PC-3 (cell line): ENCODE measurements at regions of chr11 and their contacts with region 1.

Region 1: DNA sequence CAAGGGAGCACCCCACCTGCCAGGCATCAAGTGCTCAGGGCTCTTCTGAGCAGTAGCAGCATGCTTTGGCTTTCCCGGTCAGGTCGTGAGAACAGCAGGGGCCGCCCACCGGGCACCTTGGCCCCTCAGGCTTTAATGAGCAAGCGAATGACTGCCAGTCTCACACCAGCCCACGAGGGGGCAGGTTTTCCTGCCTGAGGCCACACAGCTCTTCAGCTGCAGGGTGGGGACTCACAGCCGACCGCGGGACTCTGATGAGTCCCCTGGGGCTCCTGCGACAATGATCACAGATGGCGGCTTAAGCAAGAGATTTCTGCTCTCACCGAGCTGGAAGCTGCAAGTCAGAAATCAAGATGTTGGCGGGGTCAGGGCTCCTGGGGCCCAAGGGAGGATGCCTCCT is 14.3 kb upstream of the FGF19 start:
- DNase-seq: peak; percentile 77
- ATAC-seq: peak; percentile 59
- H3K4me3 ChIP-seq: no peak overlapping the region
- H3K27ac ChIP-seq: no peak overlapping the region
- H3K4me1 ChIP-seq: no peaks in the 10 kb centered on the region
- H3K27me3 ChIP-seq: no peaks in the 10 kb centered on the region
- CTCF ChIP-seq: peak; percentile 87

Region 2: GRCh38 chr11:69642913-69643632 is 75.1 kb before region 1 on chr11:
- CTCF ChIA-PET with region 1: no interaction called
- POLR2A ChIA-PET with region 1: no interaction called
- intact Hi-C with region 1: no loop called
- DNase-seq: peak; percentile 85
- ATAC-seq: peak; percentile 6
- H3K4me3 ChIP-seq: peak overlapping the region; percentile 99
- H3K27ac ChIP-seq: peak overlapping the region; percentile 84
- H3K4me1 ChIP-seq: peaks cover 39% of the 10 kb centered on the region
- H3K27me3 ChIP-seq: no peaks in the 10 kb centered on the region
- CTCF ChIP-seq: peak; percentile 90

Region 3: GRCh38 chr11:69888483-69889076 is 170.4 kb after region 1 on chr11:
- CTCF ChIA-PET with region 1: no interaction called
- POLR2A ChIA-PET with region 1: no interaction called
- intact Hi-C with region 1: loop called (anchors 1 kb)
- DNase-seq: peak; percentile 93
- ATAC-seq: peak; percentile 85
- H3K4me3 ChIP-seq: no peak overlapping the region
- H3K27ac ChIP-seq: no peak overlapping the region
- H3K4me1 ChIP-seq: peaks cover 5% of the 10 kb centered on the region; the same call in 1 of the 2 replicates
- H3K27me3 ChIP-seq: no peaks in the 10 kb centered on the region
- CTCF ChIP-seq: peak; percentile 97